B cell (primary cell): ENCODE measurements at regions of chr14 and their contacts with region 1.

Region 1: DNA sequence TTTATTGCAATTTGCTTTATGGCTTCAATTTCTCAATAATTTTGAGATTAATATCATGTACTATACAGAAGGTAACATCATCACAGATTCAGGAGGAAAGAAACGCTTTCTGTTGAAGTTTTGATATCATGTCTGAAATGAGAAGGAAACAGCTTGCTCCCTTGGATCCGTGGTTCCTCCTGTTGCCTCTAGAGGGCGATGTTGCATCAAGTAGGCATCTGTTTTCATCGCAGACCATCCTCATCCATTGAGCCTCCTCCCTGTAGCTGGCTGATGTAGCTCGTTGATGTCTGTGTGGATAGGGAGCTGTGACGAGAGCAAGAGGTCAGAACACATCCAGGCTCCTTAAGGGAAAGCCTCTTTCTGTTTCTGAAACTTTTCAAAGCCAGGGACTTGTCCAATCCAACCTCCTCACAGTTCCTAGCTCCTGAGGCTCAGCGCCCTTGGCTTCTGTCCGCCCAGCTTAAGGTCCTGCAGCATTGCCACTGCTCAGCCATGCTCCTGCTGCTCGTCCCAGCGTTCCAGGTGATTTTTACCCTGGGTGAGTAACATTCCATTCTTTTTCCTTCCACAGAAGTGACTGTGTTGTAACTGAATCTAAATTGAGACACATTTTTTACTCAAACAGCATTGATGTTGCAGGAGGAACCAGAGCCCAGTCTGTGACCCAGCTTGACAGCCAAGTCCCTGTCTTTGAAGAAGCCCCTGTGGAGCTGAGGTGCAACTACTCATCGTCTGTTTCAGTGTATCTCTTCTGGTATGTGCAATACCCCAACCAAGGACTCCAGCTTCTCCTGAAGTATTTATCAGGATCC is 304.8 kb upstream of the OR4E1 start:
- DNase-seq: peak; percentile 60
- ATAC-seq: no peak
- H3K4me3 ChIP-seq: no peak overlapping the region
- H3K4me3 Mint-ChIP-seq: no peak overlapping the region
- H3K27ac ChIP-seq: no peak overlapping the region
- H3K27ac Mint-ChIP-seq: no peak overlapping the region
- H3K4me1 ChIP-seq: no peaks in the 10 kb centered on the region
- H3K4me1 Mint-ChIP-seq: no peaks in the 10 kb centered on the region
- H3K27me3 ChIP-seq: peaks cover 0 to 9% (median 5%) of the 10 kb centered on the region in 4 experiments
- H3K27me3 Mint-ChIP-seq: peaks cover 35% of the 10 kb centered on the region
- CTCF ChIP-seq: peak; percentile 85

Region 2: DNA sequence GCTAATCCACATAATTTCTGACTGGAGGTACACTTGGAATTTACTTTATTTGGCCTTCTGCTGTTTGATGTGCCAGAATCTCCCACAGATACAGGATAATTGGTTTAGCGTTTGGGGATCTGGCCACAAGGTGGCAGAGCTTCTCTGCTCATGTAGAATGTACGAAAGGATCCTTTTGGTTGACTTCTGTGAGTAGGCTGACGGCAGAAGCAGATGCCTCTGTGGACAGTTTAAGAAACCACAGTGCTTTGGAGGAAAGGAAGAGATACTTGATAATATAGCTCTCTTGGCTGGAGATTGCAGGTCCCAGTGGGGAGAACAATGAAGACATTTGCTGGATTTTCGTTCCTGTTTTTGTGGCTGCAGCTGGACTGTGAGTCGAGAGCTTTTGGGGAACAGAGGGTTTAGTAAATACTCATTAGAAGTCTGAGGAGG is 229.5 kb before region 1 on chr14:
- CTCF ChIA-PET with region 1: no interaction called
- POLR2A ChIA-PET with region 1: no interaction called
- intact Hi-C with region 1: no loop called
- DNase-seq: peak; percentile 20
- ATAC-seq: no peak
- H3K4me3 ChIP-seq: no peak overlapping the region
- H3K4me3 Mint-ChIP-seq: no peak overlapping the region
- H3K27ac ChIP-seq: no peak overlapping the region
- H3K27ac Mint-ChIP-seq: no peak overlapping the region
- H3K4me1 ChIP-seq: peaks cover 0 to 2% of the 10 kb centered on the region in 2 donors
- H3K4me1 Mint-ChIP-seq: peaks cover 4% of the 10 kb centered on the region
- H3K27me3 ChIP-seq: no peaks in the 10 kb centered on the region
- H3K27me3 Mint-ChIP-seq: peaks cover 18% of the 10 kb centered on the region
- CTCF ChIP-seq: peak; percentile 61

Region 3: GRCh38 chr14:21965042-21965441 is 13.3 kb before region 1 on chr14:
- CTCF ChIA-PET with region 1: interaction called, 25 read pairs
- POLR2A ChIA-PET with region 1: no interaction called
- intact Hi-C with region 1: no loop called
- DNase-seq: no peak
- ATAC-seq: no peak
- H3K4me3 ChIP-seq: no peak overlapping the region
- H3K4me3 Mint-ChIP-seq: no peak overlapping the region
- H3K27ac ChIP-seq: no peak overlapping the region
- H3K27ac Mint-ChIP-seq: no peak overlapping the region
- H3K4me1 ChIP-seq: no peaks in the 10 kb centered on the region
- H3K4me1 Mint-ChIP-seq: no peaks in the 10 kb centered on the region
- H3K27me3 ChIP-seq: peaks cover 0 to 5% (median 1%) of the 10 kb centered on the region in 4 experiments
- H3K27me3 Mint-ChIP-seq: peaks cover 53% of the 10 kb centered on the region
- CTCF ChIP-seq: no peak

Region 4: GRCh38 chr14:21999402-21999801 is 21.0 kb after region 1 on chr14:
- CTCF ChIA-PET with region 1: interaction called, 10 read pairs
- POLR2A ChIA-PET with region 1: no interaction called
- intact Hi-C with region 1: no loop called
- DNase-seq: no peak
- ATAC-seq: no peak
- H3K4me3 ChIP-seq: no peak overlapping the region
- H3K4me3 Mint-ChIP-seq: no peak overlapping the region
- H3K27ac ChIP-seq: no peak overlapping the region
- H3K27ac Mint-ChIP-seq: no peak overlapping the region
- H3K4me1 ChIP-seq: no peaks in the 10 kb centered on the region
- H3K4me1 Mint-ChIP-seq: no peaks in the 10 kb centered on the region
- H3K27me3 ChIP-seq: peaks cover 0 to 7% (median 3%) of the 10 kb centered on the region in 4 experiments
- H3K27me3 Mint-ChIP-seq: peaks cover 30% of the 10 kb centered on the region
- CTCF ChIP-seq: no peak